Left ventricle myocardium inferior (tissue), 1 donor: ENCODE measurements at regions of chr15 and their contacts with region 1.

Region 1: GRCh38 chr15:44738340-44738984 is 2.1 kb downstream of the TRIM69 start:
- DNase-seq: no peak
- H3K4me3 ChIP-seq: no peak overlapping the region
- H3K27ac ChIP-seq: no peak overlapping the region
- H3K4me1 ChIP-seq: peaks cover 22% of the 10 kb centered on the region
- H3K27me3 ChIP-seq: no peaks in the 10 kb centered on the region
- CTCF ChIP-seq: peak; percentile 83

Region 2: DNA sequence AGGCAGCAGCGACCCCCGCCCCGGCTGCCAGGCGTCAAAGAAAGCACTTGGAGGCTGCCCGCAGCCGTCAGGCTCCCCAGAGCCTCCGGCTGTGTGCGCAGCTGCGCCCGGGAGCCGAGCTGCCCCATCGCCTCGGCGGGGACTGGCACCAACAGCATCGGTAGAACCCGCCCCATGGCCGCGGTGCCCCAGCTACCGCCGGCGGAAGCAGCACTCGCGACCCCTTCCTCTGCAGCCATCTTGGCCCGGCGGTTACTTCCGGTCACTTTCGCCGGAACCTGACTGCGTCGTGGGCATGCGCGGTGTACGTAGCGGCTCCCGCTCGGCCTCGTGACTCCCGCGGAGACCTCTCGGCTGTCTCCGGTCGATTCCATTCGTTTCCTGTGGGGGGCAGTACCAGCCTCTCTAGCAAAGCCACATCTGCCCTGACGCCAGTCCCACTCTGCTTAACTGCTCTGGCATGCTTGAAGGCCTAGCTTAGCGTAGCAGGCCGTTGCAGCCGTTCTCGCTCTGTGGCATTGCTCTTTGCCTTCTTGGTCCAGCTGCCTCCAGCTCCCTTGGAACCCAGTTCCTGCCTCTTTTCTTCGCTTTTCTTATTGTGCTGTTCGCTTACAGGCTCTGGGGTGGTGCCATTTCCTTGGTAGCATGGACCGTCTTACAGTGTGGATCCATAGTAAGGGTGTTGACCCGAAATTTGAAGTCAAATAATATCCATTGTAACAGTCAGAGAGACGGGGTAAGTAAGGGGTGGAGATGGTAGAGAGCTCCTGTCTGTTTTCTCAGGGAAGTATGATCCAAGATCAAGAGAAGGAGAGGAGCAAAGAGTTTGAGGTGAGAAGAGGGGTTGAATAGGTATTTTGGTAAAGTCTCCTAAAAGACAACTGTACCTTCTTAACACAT is 74.8 kb before region 1 on chr15 and contains the start of gene SPG11:
- intact Hi-C with region 1: loop called (anchors 5 kb)
- DNase-seq: peak; percentile 98
- H3K4me3 ChIP-seq: peak within 1 kb of the TSS; percentile 99
- H3K27ac ChIP-seq: peak within 1 kb of the TSS; percentile 100
- H3K4me1 ChIP-seq: peaks cover 49% of the 10 kb centered on the region
- H3K27me3 ChIP-seq: no peaks in the 10 kb centered on the region
- CTCF ChIP-seq: peak; percentile 98
- total RNA-seq, gene SPG11: 49.6 TPM